ENCODE measurements at regions of chr1 and their contacts with region 1.

Region 1: GRCh38 chr1:44807262-44808062 is at the start of gene DYNLT4:
- DNase-seq: peak; percentile 74
- CTCF ChIP-seq: no peak

Region 2: DNA sequence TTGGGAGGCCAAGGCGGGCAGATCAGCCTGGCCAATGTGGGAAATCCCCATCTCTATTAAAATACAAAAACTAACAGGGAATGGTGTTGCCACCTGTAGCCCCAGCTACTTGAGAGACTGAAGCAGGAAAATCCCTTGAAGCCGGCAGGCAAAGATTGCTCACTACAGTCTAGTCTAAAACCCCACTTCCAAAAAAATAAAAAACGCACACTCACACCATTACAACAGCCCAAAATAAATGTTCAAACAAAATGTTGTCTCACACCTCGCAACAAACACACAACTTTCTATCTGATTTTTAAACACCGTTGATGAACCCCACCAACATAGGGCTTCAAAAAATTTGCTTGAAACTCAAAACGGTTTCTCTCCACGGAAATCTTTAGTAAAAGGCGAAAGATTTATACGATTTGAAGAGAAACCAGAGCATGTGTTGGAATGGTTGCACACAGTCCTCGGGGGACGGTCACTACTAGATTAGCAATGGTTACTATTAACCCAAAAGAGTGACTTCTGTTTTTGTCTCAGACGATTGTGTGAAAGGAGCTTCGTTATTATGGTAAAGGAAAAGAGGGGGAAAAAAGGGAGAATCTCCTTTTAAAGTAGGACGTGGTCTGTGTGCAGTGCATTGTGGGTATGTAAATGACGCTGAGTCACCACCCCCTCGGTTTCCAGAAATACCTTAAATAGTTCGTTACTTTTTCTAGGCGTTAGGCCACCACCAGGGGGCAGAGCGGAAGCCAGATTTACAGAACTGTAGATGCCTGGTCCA is 76.5 kb before region 1 on chr1 and contains the start of gene RNU5D-1:
- CTCF ChIA-PET with region 1: interaction called, 21 read pairs
- POLR2A ChIA-PET with region 1: interaction called, 12 read pairs
- DNase-seq: peak; percentile 87
- CTCF ChIP-seq: peak; percentile 81

Region 3: DNA sequence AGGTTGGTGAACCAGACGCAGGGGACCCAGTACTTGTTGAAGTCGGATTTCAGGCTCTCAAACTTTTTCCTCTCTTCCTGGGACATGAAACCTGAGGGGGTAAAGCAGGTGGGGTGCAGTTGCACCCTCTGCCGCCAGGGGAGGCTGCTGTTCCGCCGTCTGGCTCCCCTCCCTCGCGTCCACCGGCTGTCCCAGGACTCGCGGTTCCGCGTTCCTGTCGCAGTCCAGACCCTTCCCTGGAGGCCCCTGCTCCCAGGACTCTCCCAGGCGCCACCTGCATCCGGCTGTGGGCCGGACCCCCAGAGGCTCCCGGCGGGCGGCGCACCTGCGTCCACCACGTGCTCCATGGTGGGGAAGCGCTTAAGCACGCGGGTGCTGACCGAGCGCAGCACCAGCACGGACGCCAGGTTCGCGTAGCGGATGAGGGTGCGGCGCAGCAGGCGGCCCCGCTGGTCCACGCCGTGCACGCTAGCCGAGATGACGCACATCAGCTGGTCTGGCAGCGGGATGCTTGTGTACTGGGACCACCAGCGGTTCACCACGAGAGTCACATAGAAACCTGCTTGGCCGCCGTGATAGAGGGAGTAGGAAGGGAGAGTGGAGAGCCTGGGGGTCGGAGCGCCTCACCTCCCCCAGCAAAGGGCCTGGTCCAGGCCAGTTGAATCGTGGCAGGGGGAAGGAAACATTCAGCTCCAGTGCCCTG is 21.2 kb before region 1 on chr1:
- CTCF ChIA-PET with region 1: interaction called, 25 read pairs
- POLR2A ChIA-PET with region 1: interaction called, 4 read pairs
- DNase-seq: peak; percentile 80
- CTCF ChIP-seq: peak; percentile 91

Region 4: DNA sequence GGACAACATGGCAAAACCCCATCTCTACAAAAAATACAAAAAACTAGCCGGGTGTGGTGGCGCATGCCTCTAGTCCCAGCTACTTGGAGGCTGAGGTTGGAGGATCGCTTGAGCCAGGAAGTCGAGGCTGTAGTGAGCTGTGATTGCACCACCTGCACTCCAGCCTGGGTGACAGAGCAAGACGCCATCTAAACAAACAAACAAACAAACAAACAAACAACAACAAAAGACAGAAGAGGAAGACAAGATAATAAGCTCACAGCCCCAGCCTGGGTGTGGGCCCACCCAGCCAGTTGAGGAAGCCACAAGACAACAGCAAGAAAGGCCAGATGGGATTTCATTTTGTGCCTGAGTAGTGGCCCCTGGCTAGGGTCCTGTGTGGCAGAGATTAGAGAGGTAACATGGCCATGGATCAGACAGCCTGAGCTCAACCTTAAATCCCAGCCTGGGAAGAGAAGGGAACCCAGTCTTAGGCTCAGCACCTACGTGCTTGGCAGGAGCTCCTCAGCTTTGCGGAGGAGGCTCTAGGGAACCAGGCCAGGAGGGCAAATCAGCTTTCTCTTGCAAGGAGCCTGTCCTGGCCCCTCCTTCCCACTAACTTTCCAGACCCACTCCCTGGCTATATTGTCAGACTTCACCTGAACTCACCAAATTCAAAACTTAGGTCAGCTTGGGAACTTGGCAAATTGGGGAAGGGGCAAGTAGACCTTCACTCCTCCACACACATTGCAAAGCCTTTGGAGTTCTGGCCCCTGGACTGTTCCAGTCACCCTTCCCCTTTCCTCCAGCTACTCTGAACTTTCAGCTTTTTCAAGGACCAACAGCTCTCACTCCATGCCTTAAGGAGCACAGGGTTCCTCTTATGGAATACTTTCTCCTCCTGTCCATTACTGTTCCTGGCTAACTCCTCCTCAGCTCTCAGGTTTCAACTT is 14.4 kb before region 1 on chr1:
- CTCF ChIA-PET with region 1: interaction called, 21 read pairs
- POLR2A ChIA-PET with region 1: interaction called, 4 read pairs
- DNase-seq: no peak
- CTCF ChIP-seq: no peak

Region 5: DNA sequence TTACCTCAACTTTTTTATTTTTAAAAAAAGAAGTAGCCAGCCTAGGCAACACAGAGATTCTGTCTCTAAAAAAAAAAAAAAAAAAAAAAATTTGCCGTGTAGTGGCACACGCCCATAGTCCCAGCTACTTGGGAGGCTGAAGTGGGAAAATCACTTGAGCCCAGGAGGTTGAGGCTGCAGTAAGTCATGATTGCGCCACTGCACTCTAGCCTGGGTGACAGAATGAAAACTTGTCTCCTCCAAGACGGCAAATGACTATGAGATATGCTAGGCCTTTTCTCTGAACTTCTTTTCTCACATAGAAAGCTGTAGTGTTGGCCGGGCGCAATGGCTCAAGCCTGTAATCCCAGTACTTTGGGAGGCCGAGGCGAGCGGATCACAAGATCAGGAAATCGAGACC is 60.3 kb after region 1 on chr1:
- CTCF ChIA-PET with region 1: no interaction called
- POLR2A ChIA-PET with region 1: no interaction called
- DNase-seq: no peak
- CTCF ChIP-seq: no peak